Activated T-helper 1 cell treated with anti-CD3 and anti-CD28 coated beads, Interleukin-12 subunit alpha, Interleukin-12 subunit beta, Interleukin-2, Interleukin-4 antibody, amounts not matched to agents 30 ng/mL and 10 ng/mL and 1 ng/mL, durations not matched to agents 14 hours and 24 hours and 36 hours (primary cell): ENCODE measurements at regions of chr9 and their contacts with region 1.

Region 1: GRCh38 chr9:135500525-135501358 is at the start of gene MRPS2:
- DNase-seq: peak; percentile 85
- H3K4me3 Mint-ChIP-seq: peak within 1 kb of the TSS; percentile 92
- H3K27ac Mint-ChIP-seq: peak within 1 kb of the TSS; percentile 91
- H3K4me1 Mint-ChIP-seq: peaks cover 18% of the 10 kb centered on the region
- H3K27me3 Mint-ChIP-seq: peaks cover 7% of the 10 kb centered on the region
- total RNA-seq, gene MRPS2: 66.6 and 70.8 TPM in 2 replicates

Region 2: GRCh38 chr9:135468866-135469521 is 31.7 kb before region 1 on chr9:
- intact Hi-C with region 1: loop called (anchors 5 kb)
- DNase-seq: peak; percentile 44
- H3K4me3 Mint-ChIP-seq: peak overlapping the region; percentile 65
- H3K27ac Mint-ChIP-seq: peak overlapping the region; percentile 79
- H3K4me1 Mint-ChIP-seq: peaks cover 17% of the 10 kb centered on the region
- H3K27me3 Mint-ChIP-seq: peaks cover 13% of the 10 kb centered on the region

Region 3: GRCh38 chr9:135890181-135891026 is 389.7 kb after region 1 on chr9:
- intact Hi-C with region 1: no loop called
- DNase-seq: no peak
- H3K4me3 Mint-ChIP-seq: no peak overlapping the region
- H3K27ac Mint-ChIP-seq: no peak overlapping the region
- H3K4me1 Mint-ChIP-seq: peaks cover 44% of the 10 kb centered on the region
- H3K27me3 Mint-ChIP-seq: peaks cover 6% of the 10 kb centered on the region